ENCODE measurements at regions of chr5 and their contacts with region 1.

Region 1: GRCh38 chr5:168679515-168679920 is 100.3 kb upstream of the PANK3 start:
- DNase-seq: peak; percentile 49 to 72
- ATAC-seq: peak; percentile 22 to 67 (median 52)
- H3K4me3 ChIP-seq: no peak overlapping the region
- H3K27ac ChIP-seq: no peak overlapping the region
- H3K4me1 ChIP-seq: peaks cover 0 to 42% (median 26%) of the 10 kb centered on the region in 9 donors
- H3K27me3 ChIP-seq: no peaks in the 10 kb centered on the region
- CTCF ChIP-seq: peak; percentile 86 to 95 (median 90)

Region 2: DNA sequence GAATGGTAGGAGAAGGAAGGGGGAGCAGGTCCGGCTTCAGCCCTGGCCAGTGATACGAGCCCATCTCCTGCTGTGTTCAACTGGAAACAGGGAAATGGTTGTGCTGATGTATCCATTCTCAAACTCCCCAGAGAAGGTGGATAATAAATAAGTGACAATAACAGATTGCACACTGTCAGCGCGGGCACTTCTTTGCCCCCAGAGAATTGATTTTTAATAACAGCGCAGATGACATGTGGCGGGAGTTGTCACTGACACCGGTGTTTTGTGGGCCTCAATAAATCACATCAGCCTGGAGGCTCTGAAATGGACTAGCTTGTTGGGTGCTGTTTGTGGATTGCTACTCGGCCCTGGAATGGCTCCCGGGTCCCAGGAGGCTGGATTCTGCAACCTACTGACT is 41.1 kb after region 1 on chr5:
- intact Hi-C with region 1: no loop called
- DNase-seq: no peak
- ATAC-seq: no peak
- H3K4me3 ChIP-seq: no peak overlapping the region
- H3K27ac ChIP-seq: no peak overlapping the region
- H3K4me1 ChIP-seq: no peaks in the 10 kb centered on the region
- H3K27me3 ChIP-seq: no peaks in the 10 kb centered on the region
- CTCF ChIP-seq: no peak

Region 3: DNA sequence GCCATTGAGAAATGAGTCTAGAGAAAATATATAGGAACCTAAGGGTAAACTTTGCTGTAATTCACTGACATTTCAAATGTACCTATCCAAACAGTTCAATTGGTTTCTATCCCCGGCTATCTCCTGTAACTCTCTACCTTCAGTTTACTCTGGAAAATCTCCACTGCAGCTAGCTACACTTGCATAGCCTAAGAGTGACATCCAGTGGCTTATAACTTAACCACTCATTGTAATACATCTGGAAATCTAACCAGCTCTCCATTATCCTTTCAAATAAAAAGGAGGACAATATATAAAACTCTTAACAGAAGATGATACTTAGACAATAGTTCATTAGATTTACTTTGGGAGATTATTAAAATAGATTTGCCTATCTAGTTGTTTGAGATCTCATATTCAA is 868.8 kb after region 1 on chr5:
- intact Hi-C with region 1: loop called in 2 of 10 experiments (anchors 10 kb)
- DNase-seq: no peak
- ATAC-seq: peak in 6 of 8 donors; percentile 52 to 83 (median 70)
- H3K4me3 ChIP-seq: no peak overlapping the region
- H3K27ac ChIP-seq: no peak overlapping the region
- H3K4me1 ChIP-seq: peaks cover 0 to 9% (median 0%) of the 10 kb centered on the region in 9 donors
- H3K27me3 ChIP-seq: peaks cover 0 to 38% (median 22%) of the 10 kb centered on the region in 7 donors
- CTCF ChIP-seq: peak in 8 of 9 donors; percentile 21 to 70 (median 52)

Region 4: DNA sequence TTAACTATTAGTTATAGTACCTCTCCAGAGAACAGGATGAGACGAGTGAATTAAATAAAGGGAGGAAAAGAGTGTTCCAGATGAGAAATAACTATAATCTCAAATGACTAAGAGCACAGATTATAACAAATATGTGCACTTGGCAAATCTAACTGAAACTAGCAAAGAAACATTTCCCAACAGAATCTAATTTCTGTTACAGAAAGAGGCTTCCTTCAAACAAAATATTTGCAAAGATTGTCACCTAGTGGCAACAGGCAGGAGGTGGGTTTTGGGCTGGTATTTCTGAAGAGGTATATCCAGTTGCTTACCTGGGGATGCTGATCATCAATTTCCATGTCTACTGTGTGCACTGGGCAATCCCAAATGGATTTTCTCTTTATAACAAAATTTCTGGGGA is 898.4 kb after region 1 on chr5:
- intact Hi-C with region 1: loop called in 5 of 10 experiments (anchors 2 to 10 kb)
- DNase-seq: no peak
- ATAC-seq: no peak
- H3K4me3 ChIP-seq: no peak overlapping the region
- H3K27ac ChIP-seq: no peak overlapping the region
- H3K4me1 ChIP-seq: peaks cover 0 to 7% (median 2%) of the 10 kb centered on the region in 9 donors
- H3K27me3 ChIP-seq: peaks cover 0 to 37% (median 13%) of the 10 kb centered on the region in 7 donors
- CTCF ChIP-seq: peak in 3 of 9 donors; percentile 23 to 30 (median 30)

Region 5: DNA sequence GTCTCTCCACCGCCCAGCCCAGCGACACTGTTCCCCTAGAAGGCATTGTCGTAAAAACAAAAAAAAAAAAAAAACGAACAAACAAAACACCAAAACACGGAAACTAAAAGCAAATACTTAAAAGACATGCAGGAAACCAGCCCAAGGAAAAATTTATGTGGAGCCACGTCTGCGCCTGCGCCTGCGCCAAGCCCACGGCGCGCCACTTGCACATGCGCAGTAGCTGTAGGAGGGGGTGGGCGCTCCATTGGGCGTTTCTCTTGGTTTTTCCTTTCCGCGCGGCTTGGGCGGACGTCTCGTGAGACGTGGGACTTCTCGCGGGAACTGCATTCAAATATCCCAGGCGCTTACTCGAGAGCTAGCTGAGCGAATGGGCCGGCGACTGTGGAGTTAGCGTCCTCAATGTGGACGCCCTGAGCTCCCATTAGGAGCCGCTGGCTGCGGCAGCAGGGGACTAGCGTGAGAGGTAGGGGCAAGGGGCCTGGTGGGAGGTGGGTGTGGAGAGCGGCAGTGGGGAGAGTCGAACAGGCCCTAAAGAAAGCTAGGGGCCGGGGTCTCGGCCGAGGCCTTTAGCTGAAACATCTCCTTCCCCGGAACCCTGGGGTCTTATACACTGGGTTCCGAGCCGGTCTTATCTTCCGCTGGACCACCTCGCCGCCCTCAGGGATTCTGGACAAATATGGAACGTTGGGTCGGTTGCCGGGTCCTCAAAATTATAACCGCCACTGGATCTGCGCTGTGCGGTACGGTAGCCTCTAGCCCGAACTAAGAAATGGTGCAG is 904.1 kb after region 1 on chr5 and contains the start of gene SPDL1:
- intact Hi-C with region 1: loop called in 5 of 10 experiments (anchors 2 to 10 kb)
- DNase-seq: peak; percentile 95 to 96
- ATAC-seq: peak; percentile 95 to 99 (median 98)
- H3K4me3 ChIP-seq: peak within 1 kb of the TSS; percentile 62 to 91 (median 82)
- H3K27ac ChIP-seq: peak within 1 kb of the TSS in 9 of 10 donors; percentile 48 to 84 (median 73)
- H3K4me1 ChIP-seq: peaks cover 0 to 17% (median 11%) of the 10 kb centered on the region in 9 donors
- H3K27me3 ChIP-seq: peaks cover 0 to 10% (median 0%) of the 10 kb centered on the region in 7 donors
- CTCF ChIP-seq: no peak
- total RNA-seq, gene SPDL1: 2.9 to 5.7 (median 4.2) TPM

Measured in heart right ventricle (tissue), 16 donors.